Gastrocnemius medialis (tissue), 4 donors: ENCODE measurements at regions of chr1 and their contacts with region 1.

Region 1: GRCh38 chr1:48202030-48202752 is 20.3 kb upstream of the SLC5A9 start:
- DNase-seq: peak; percentile 11 to 27
- ATAC-seq: peak; percentile 49 to 60
- H3K4me3 ChIP-seq: no peak overlapping the region
- H3K27ac ChIP-seq: no peak overlapping the region
- H3K4me1 ChIP-seq: no peaks in the 10 kb centered on the region
- H3K27me3 ChIP-seq: no peaks in the 10 kb centered on the region
- CTCF ChIP-seq: peak; percentile 38 to 78 (median 62)
- POLR2A ChIP-seq: no peak

Region 2: DNA sequence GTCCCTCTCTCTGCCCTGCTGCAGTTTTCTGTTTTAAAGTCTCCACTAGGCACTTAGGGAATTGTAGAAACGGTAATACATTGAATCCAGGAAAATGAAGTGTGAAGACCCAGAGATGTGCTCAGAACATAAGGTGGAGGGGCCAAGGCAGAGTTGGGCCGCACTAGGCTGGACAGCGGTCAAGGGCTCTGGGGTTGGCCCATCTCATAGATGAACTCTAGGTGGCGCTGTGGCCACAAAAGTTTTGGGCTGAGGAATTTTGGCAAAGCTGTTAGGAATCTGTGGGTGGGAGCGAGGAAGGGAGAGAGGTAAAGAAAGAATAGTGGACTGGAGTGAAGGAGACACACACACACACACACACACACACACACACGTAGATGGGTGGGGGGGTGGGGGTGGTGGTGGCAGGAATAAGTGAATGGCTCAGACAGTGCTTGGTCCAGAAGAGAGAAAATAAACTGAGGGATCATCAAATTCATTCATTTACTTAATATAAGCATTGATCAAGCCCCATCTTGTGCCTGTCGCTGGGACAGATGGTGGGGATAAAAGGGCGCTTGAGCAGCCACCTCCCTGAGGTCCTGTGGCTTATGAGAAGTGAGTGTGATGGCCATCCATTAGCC is 463.5 kb before region 1 on chr1:
- in situ Hi-C with region 1: loop called in 2 of 4 experiments (anchors 25 kb)
- intact Hi-C with region 1: loop called (anchors 2 kb)
- DNase-seq: peak in 1 of 2 donors; percentile 23
- ATAC-seq: peak; percentile 56 to 74
- H3K4me3 ChIP-seq: no peak overlapping the region
- H3K27ac ChIP-seq: no peak overlapping the region
- H3K4me1 ChIP-seq: no peaks in the 10 kb centered on the region
- H3K27me3 ChIP-seq: peaks cover 0 to 3% (median 0%) of the 10 kb centered on the region in 3 donors
- CTCF ChIP-seq: peak; percentile 31 to 76 (median 55)
- POLR2A ChIP-seq: no peak

Region 3: GRCh38 chr1:48214820-48215219 is 12.6 kb after region 1 on chr1:
- in situ Hi-C with region 1: no loop called
- intact Hi-C with region 1: no loop called
- DNase-seq: no peak
- ATAC-seq: peak in 1 of 2 donors; percentile 36
- H3K4me3 ChIP-seq: no peak overlapping the region
- H3K27ac ChIP-seq: no peak overlapping the region
- H3K4me1 ChIP-seq: no peaks in the 10 kb centered on the region
- H3K27me3 ChIP-seq: no peaks in the 10 kb centered on the region
- CTCF ChIP-seq: no peak
- POLR2A ChIP-seq: no peak